Activated CD4-positive, alpha-beta memory T cell treated with anti-CD3 and anti-CD28 coated beads for 36 hours (primary cell): ENCODE measurements at regions of chr2 and their contacts with region 1.

Region 1: DNA sequence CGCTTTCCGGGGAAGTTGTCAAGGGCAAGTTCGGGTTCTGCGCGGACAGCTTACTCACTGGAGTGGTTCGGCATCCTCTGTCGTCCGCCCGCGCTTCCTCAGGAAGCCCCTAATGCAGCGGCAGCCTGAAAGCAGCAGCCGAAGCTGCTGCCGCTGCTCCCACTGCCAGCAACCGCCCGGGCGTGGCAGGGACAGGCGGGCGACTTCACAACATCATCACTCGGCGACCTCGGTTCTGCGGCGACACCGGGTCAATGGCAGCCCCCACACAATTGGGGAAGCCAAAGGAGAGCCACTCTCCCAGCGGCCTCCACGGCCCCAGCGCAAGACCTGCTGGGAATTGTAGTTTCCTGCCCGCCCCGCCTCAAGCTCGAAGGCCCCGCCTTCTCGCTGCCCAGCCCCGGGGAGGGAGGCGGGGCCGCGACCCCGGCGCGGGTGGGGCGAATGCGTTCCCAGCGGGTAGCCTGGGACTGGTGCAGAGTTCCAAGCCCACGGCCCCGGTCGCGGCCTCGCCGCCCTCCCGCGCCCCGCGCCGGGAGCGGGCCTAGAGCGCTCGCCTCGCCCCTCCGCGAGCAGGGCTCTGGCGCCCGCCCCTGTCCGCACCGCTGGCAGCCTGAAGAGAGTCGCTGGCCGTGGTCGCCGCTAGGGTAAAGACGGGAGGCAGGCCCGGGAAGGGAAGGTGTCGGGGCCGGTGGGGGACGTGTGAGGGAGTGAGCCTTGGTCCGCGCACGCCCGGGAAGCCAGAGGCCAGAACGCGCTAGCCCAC is at the starts of genes STRADB and TRAK2:
- DNase-seq: peak; percentile 98
- H3K4me3 Mint-ChIP-seq: peak within 1 kb of the TSS; percentile 96
- H3K27ac Mint-ChIP-seq: peak within 1 kb of the TSS; percentile 97
- H3K4me1 Mint-ChIP-seq: peaks cover 44% of the 10 kb centered on the region
- H3K27me3 Mint-ChIP-seq: no peaks in the 10 kb centered on the region
- total RNA-seq, gene STRADB: 18.5 to 19.8 TPM
- total RNA-seq, gene TRAK2: 23.5 to 26.0 TPM

Region 2: GRCh38 chr2:201327678-201328077 is 123.8 kb before region 1 on chr2:
- CTCF ChIA-PET with region 1: no interaction called
- POLR2A ChIA-PET with region 1: no interaction called
- intact Hi-C with region 1: no loop called
- DNase-seq: no peak
- H3K4me3 Mint-ChIP-seq: no peak overlapping the region
- H3K27ac Mint-ChIP-seq: no peak overlapping the region
- H3K4me1 Mint-ChIP-seq: peaks cover 7% of the 10 kb centered on the region
- H3K27me3 Mint-ChIP-seq: no peaks in the 10 kb centered on the region

Region 3: DNA sequence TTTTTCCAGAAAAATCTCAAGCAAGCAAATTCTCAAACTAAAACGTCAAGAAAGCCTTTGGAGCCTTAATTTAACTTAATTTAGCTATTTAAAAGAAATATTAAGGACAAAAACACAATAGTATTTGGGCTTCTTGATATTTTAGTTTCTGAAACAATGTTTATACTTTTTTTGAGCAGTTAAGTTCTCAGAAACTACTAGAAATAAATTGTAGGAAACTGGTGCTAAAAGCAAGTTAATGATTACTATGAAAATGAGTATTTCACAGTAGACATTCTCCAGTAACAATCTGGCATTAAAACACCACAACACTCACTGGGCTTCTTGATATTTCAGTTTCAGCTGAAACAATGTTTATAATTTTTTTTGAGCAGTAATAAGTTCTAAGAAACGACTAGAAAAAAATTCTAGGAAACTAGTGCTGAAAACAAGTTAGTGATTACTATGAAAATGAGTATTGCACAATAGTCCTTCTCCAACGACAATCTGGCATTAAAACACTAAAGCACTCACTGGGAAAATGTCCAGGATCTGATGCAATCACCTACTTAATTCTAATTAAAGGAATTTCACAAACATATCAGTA is 45.3 kb before region 1 on chr2:
- CTCF ChIA-PET with region 1: interaction called, 6 read pairs
- POLR2A ChIA-PET with region 1: interaction called, 6 read pairs
- intact Hi-C with region 1: loop called (anchors 1 kb)
- DNase-seq: no peak
- H3K4me3 Mint-ChIP-seq: no peak overlapping the region
- H3K27ac Mint-ChIP-seq: peak overlapping the region; percentile 26
- H3K4me1 Mint-ChIP-seq: peaks cover 38% of the 10 kb centered on the region
- H3K27me3 Mint-ChIP-seq: no peaks in the 10 kb centered on the region

Region 4: DNA sequence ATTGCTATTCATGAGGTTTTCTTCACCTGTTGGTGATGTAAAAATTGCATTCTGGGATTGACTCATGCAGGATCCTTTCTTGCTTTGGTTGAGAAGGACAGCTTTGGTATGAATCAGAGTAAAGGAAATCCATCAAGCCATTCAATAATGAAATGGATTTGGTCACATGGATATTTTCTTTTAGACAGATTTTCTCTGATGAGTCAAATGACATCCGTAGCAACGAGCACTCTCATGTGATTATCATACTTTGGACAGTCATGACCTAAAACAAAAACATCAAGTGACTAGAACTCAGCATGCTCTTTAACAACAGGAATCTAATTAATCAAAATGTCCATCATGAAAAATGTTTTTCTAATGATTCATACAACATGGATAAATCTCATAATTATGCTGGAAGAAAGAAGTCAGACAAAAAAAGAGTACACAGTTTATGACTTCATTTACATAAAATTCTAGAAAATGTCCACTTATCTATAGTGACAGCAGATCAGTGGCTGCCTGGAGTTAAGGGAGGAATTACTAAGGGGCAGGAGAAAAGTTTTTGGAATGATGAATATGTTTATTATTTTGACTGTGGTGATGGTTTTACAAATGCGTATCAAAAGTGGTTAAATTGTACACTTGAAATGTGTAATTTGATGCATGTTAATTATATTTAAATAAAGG is 30.9 kb before region 1 on chr2:
- CTCF ChIA-PET with region 1: no interaction called
- POLR2A ChIA-PET with region 1: interaction called, 5 read pairs
- intact Hi-C with region 1: loop called (anchors 1 kb)
- DNase-seq: no peak
- H3K4me3 Mint-ChIP-seq: no peak overlapping the region
- H3K27ac Mint-ChIP-seq: peak overlapping the region; percentile 20
- H3K4me1 Mint-ChIP-seq: peaks cover 49% of the 10 kb centered on the region
- H3K27me3 Mint-ChIP-seq: no peaks in the 10 kb centered on the region

Region 5: DNA sequence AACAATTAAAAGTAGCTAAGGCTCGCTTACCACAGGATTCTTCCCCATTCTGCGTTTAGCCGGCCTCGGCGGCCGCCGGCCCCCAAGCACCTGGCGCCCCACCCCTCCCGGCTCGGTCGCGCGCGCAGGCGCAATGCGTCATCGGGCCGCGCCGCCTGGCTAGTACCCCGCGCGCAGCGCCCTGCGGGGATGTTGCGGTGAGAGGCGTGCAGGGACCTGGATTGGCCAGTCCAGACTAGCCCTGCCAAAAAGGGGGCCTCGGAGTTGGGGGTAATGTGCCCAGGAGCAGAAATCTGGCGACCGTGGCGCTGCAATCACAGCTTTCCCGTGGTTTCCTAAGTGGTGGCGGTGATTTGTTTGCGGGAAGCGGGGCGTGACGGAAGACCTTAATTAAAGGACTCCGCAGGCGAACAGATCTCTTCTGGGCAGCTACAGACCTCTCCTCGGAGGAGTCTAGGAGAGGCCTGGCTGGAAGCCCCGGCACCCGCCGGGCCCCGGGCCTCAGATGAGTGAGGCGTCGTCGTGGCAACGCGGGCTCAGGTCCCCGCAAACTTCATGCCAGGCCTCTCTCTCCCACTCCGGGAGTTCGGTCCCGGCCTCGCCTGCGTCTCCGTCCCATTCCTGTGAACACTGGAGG is 191.2 kb after region 1 on chr2:
- CTCF ChIA-PET with region 1: interaction called, 3 read pairs
- POLR2A ChIA-PET with region 1: interaction called, 4 read pairs
- intact Hi-C with region 1: loop called (anchors 2 kb)
- DNase-seq: peak; percentile 89
- H3K4me3 Mint-ChIP-seq: peak overlapping the region; percentile 87
- H3K27ac Mint-ChIP-seq: peak overlapping the region; percentile 84
- H3K4me1 Mint-ChIP-seq: peaks cover 10% of the 10 kb centered on the region
- H3K27me3 Mint-ChIP-seq: no peaks in the 10 kb centered on the region

Region 6: GRCh38 chr2:202278944-202279343 is 827.5 kb after region 1 on chr2:
- CTCF ChIA-PET with region 1: no interaction called
- POLR2A ChIA-PET with region 1: no interaction called
- intact Hi-C with region 1: loop called (anchors 1 kb)
- DNase-seq: no peak
- H3K4me3 Mint-ChIP-seq: no peak overlapping the region
- H3K27ac Mint-ChIP-seq: peak overlapping the region; percentile 89
- H3K4me1 Mint-ChIP-seq: peaks cover 60% of the 10 kb centered on the region
- H3K27me3 Mint-ChIP-seq: no peaks in the 10 kb centered on the region